ENCODE measurements at regions of chr1 and their contacts with region 1.

Region 1: DNA sequence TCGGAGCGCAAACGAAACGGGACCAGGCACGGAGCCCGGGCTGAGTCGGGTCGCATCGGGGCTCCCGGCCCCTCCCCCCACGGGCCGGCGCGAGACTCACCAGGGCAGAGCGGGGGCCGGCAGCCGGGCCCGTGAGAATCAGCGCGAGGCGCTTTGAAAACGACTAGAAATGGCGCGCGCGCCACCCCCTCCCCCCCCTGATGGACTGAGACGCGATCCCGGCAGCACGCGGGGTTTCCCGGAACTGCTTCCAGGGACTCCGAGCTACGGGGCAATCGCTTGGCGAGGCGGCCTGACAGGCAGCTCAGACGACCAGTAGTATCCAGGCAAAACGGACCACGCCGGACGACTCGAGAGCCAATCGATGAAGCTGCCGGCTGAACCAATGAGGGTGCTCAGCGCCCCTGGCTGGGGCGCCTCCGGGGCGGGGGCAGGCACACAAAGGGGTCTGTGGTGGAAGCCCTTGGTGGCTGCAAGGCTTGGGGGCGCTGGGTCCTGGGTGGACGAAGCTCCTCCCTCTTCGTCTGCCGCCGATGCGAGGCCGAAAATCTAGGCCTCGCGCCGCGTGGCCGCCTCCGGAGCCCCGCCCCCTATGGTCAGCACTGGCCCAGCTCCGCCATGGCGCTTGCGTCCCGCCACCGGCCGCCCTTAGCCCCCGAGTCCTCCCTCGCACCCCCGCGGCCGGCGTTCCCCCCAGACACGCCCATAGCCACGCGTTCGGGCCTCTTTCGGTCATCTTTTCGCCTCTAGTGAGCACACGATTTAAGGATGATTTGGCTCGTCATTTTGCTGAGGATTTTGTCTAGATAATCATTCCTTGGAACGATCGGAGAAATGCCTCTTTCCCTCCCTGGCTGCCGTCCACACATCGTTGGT is at the start of gene HNRNPR:
- H3K4me3 Mint-ChIP-seq: peak within 1 kb of the TSS; percentile 88
- H3K27ac Mint-ChIP-seq: peak within 1 kb of the TSS; percentile 97
- H3K4me1 Mint-ChIP-seq: peaks cover 42% of the 10 kb centered on the region
- H3K27me3 Mint-ChIP-seq: no peaks in the 10 kb centered on the region

Region 2: GRCh38 chr1:23367791-23368561 is 23.6 kb after region 1 on chr1:
- intact Hi-C with region 1: loop called (anchors 1 kb)
- H3K4me3 Mint-ChIP-seq: peak overlapping the region; percentile 98
- H3K27ac Mint-ChIP-seq: peak overlapping the region; percentile 95
- H3K4me1 Mint-ChIP-seq: peaks cover 40% of the 10 kb centered on the region
- H3K27me3 Mint-ChIP-seq: peaks cover 2% of the 10 kb centered on the region

Region 3: DNA sequence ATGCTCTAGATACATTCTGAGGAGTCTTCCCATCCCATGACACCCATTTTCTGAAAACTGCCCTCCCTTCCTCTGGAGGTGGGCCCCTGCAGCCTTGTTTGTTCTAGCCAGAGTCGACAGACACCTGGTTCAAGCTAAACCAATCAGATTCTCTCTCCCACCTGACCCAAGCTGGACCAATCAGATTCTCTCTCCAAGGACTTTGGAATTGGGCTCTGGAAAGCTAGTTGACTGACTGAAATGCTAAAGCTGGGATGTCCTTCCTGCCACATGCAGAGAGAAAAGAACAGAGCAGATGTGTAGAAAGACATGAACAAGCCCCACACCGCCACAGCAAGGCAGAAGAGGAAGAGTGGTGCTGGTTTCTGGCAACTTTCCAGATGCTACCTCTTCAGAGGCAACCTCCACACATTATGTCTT is 115.0 kb after region 1 on chr1:
- intact Hi-C with region 1: no loop called
- H3K4me3 Mint-ChIP-seq: no peak overlapping the region
- H3K27ac Mint-ChIP-seq: no peak overlapping the region
- H3K4me1 Mint-ChIP-seq: no peaks in the 10 kb centered on the region
- H3K27me3 Mint-ChIP-seq: peaks cover 53% of the 10 kb centered on the region

Measured in dendritic cell treated with granulocyte-macrophage colony-stimulating factor and Interleukin-4, amounts not matched to agents 40 ng/mL and 50 ng/mL, for 4 days (primary cell).